Mammary epithelial cell (primary cell): ENCODE measurements at regions of chr19 and their contacts with region 1.

Region 1: GRCh38 chr19:53467485-53468262 is at the start of gene ZNF813:
- DNase-seq: peak; percentile 71
- H3K4me3 ChIP-seq: peak within 1 kb of the TSS; percentile 54 to 76 (median 58)
- H3K27ac ChIP-seq: peak within 1 kb of the TSS; percentile 63
- H3K4me1 ChIP-seq: no peaks in the 10 kb centered on the region
- H3K27me3 ChIP-seq: no peaks in the 10 kb centered on the region
- CTCF ChIP-seq: no peak
- total RNA-seq, gene ZNF813: 2.9 to 3.7 TPM

Region 2: GRCh38 chr19:53394974-53395839 is 72.5 kb before region 1 on chr19 and contains the start of gene ZNF765:
- CTCF ChIA-PET with region 1: no interaction called
- dilution Hi-C with region 1: no loop called
- in situ Hi-C with region 1: no loop called
- intact Hi-C with region 1: loop called (anchors 2 kb)
- DNase-seq: peak; percentile 84
- H3K4me3 ChIP-seq: peak within 1 kb of the TSS; percentile 64 to 99 (median 71)
- H3K27ac ChIP-seq: peak within 1 kb of the TSS; percentile 91
- H3K4me1 ChIP-seq: peaks cover 4% of the 10 kb centered on the region
- H3K27me3 ChIP-seq: no peaks in the 10 kb centered on the region
- CTCF ChIP-seq: peak in 1 of 2 donors; percentile 54
- total RNA-seq, gene ZNF765: 6.7 to 10.5 TPM

Region 3: GRCh38 chr19:53431399-53432087 is 36.1 kb before region 1 on chr19 and contains the start of gene ZNF761:
- CTCF ChIA-PET with region 1: no interaction called
- dilution Hi-C with region 1: no loop called
- in situ Hi-C with region 1: no loop called
- intact Hi-C with region 1: loop called (anchors 5 kb)
- DNase-seq: peak; percentile 97
- H3K4me3 ChIP-seq: peak within 1 kb of the TSS; percentile 77 to 96 (median 91)
- H3K27ac ChIP-seq: peak within 1 kb of the TSS; percentile 94
- H3K4me1 ChIP-seq: peaks cover 7% of the 10 kb centered on the region
- H3K27me3 ChIP-seq: no peaks in the 10 kb centered on the region
- CTCF ChIP-seq: peak in 1 of 2 donors; percentile 33
- total RNA-seq, gene ZNF761: 10.3 to 11.0 TPM

Region 4: GRCh38 chr19:53498581-53498980 is 30.9 kb after region 1 on chr19:
- CTCF ChIA-PET with region 1: no interaction called
- dilution Hi-C with region 1: no loop called
- in situ Hi-C with region 1: no loop called
- intact Hi-C with region 1: no loop called
- DNase-seq: no peak
- H3K4me3 ChIP-seq: no peak overlapping the region
- H3K27ac ChIP-seq: no peak overlapping the region
- H3K4me1 ChIP-seq: no peaks in the 10 kb centered on the region
- H3K27me3 ChIP-seq: no peaks in the 10 kb centered on the region
- CTCF ChIP-seq: no peak

Region 5: DNA sequence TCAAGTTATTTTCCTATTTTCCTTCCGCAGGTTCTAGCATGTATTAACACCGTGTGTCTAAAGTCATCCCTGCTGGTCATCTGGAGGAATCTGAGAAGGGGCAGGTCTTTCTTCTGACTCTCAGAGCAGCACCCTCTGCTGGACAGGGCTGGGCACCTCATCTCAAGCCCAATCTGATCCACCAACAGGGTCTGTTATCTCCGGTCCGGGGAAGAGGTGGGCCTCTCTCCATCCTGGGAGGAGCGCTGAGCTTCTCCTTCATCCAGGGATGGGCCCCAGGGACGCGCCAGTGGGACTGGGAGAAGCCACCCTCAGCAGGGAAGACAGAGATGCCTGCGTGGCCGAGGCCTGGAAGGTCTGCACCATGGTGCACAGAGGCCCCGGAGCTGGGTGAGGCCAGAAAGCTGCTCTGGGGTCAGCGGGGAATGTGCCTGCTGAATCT is 44.3 kb after region 1 on chr19:
- CTCF ChIA-PET with region 1: no interaction called
- dilution Hi-C with region 1: no loop called
- in situ Hi-C with region 1: no loop called
- intact Hi-C with region 1: loop called (anchors 1 kb)
- DNase-seq: peak; percentile 43
- H3K4me3 ChIP-seq: no peak overlapping the region
- H3K27ac ChIP-seq: no peak overlapping the region
- H3K4me1 ChIP-seq: no peaks in the 10 kb centered on the region
- H3K27me3 ChIP-seq: no peaks in the 10 kb centered on the region
- CTCF ChIP-seq: peak; percentile 33 to 65

Region 6: GRCh38 chr19:53612755-53613154 is 145.1 kb after region 1 on chr19:
- CTCF ChIA-PET with region 1: no interaction called
- dilution Hi-C with region 1: no loop called
- in situ Hi-C with region 1: no loop called
- intact Hi-C with region 1: no loop called
- DNase-seq: no peak
- H3K4me3 ChIP-seq: no peak overlapping the region
- H3K27ac ChIP-seq: no peak overlapping the region
- H3K4me1 ChIP-seq: no peaks in the 10 kb centered on the region
- H3K27me3 ChIP-seq: no peaks in the 10 kb centered on the region
- CTCF ChIP-seq: no peak